H1 (cell line): ENCODE measurements at regions of chr1 and their contacts with region 1.

Region 1: GRCh38 chr1:16009030-16009709 is 5.1 kb downstream of the SRARP start:
- DNase-seq: peak; percentile 64 to 98
- H3K4me3 ChIP-seq: no peak overlapping the region
- H3K27ac ChIP-seq: no peak overlapping the region
- H3K4me1 ChIP-seq: peaks cover 4 to 15% (median 11%) of the 10 kb centered on the region in 4 experiments
- H3K27me3 ChIP-seq: no peaks in the 10 kb centered on the region; a peak in 1 of 7 replicates
- CTCF ChIP-seq: peak; percentile 96 to 100 (median 96)
- EP300 ChIP-seq: no peak
- POLR2A ChIP-seq: no peak
- RAD21 ChIP-seq: peak; percentile 99

Region 2: GRCh38 chr1:15994590-15995351 is 14.4 kb before region 1 on chr1:
- CTCF ChIA-PET with region 1: interaction called, 27 read pairs
- POLR2A ChIA-PET with region 1: interaction called, 3 read pairs
- DNase-seq: no peak
- H3K4me3 ChIP-seq: no peak overlapping the region
- H3K27ac ChIP-seq: no peak overlapping the region
- H3K4me1 ChIP-seq: no peaks in the 10 kb centered on the region
- H3K27me3 ChIP-seq: peaks cover 0 to 3% (median 0%) of the 10 kb centered on the region in 4 experiments; a peak in 1 of 7 replicates
- CTCF ChIP-seq: peak; percentile 64 to 71 (median 67)
- EP300 ChIP-seq: no peak
- POLR2A ChIP-seq: no peak
- RAD21 ChIP-seq: peak; percentile 53 to 68

Region 3: DNA sequence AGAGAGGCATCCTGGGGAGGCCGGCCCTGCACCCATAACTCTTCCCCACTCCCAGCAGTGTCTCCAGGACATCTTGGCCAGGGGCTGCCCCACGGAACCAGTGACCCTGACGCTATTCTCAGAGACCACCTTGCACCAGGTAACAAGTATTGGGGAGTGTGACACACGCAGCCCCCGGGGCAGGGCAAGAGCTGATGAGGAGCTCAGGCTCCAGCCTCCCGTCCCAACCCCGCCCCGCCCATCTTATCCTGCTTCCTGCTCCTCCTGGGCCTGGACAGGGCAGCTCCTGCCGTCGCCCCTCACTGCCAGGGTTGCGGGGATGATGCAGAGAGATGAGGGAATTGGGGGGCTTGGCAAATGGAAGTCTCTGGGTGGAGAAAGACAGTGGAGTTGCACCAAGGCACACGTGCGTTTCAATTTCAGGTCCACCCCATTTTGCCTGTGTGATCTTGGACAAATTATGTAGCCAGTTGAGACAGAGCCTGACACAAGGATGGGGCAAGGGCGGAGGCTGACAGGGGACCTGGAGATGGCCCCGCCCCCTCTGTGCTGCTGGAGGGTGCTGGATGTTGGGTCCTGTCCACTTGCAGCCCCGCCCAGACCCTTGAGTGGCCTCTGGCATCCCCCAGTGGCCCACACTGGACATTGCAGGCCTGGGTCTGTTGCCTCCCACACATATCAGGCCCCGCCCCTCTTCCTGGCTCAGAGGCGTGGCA is 23.4 kb after region 1 on chr1:
- CTCF ChIA-PET with region 1: interaction called, 28 read pairs
- POLR2A ChIA-PET with region 1: interaction called, 8 read pairs
- DNase-seq: peak; percentile 85 to 95
- H3K4me3 ChIP-seq: no peak overlapping the region
- H3K27ac ChIP-seq: no peak overlapping the region
- H3K4me1 ChIP-seq: peaks cover 0 to 14% (median 4%) of the 10 kb centered on the region in 4 experiments; a peak in 6 of 7 replicates
- H3K27me3 ChIP-seq: no peaks in the 10 kb centered on the region; a peak in 2 of 7 replicates
- CTCF ChIP-seq: peak; percentile 86 to 97 (median 90)
- EP300 ChIP-seq: no peak
- POLR2A ChIP-seq: no peak
- RAD21 ChIP-seq: peak; percentile 90 to 91

Region 4: GRCh38 chr1:16048573-16049189 is 39.5 kb after region 1 on chr1:
- CTCF ChIA-PET with region 1: interaction called, 41 read pairs
- POLR2A ChIA-PET with region 1: interaction called, 3 read pairs
- DNase-seq: peak; percentile 75 to 97
- H3K4me3 ChIP-seq: peak overlapping the region; percentile 58 to 68 (median 67)
- H3K27ac ChIP-seq: peak overlapping the region; percentile 45; the same call in 1 of the 2 replicates
- H3K4me1 ChIP-seq: peaks cover 0 to 22% (median 5%) of the 10 kb centered on the region in 4 experiments; a peak in 6 of 7 replicates
- H3K27me3 ChIP-seq: peaks cover 0 to 6% (median 0%) of the 10 kb centered on the region in 4 experiments; a peak in 1 of 7 replicates
- CTCF ChIP-seq: peak in 2 of 3 experiments; percentile 10 to 44; a peak in 2 of 4 replicates
- EP300 ChIP-seq: no peak
- POLR2A ChIP-seq: peak in 1 of 2 experiments; percentile 60; a peak in 2 of 3 replicates
- RAD21 ChIP-seq: no peak